Activated T-helper 2 cell treated with anti-CD3 and anti-CD28 coated beads, Interferon-gamma antibody, Interleukin-2, Interleukin-4, amounts not matched to agents 10 μg/mL and 5 μg/mL and 100 μg/mL, durations not matched to agents 14 hours and 24 hours and 36 hours (primary cell): ENCODE measurements at regions of chr2 and their contacts with region 1.

Region 1: GRCh38 chr2:121649596-121650314 is 493 bp upstream of the CLASP1 start:
- DNase-seq: peak; percentile 96
- H3K4me3 Mint-ChIP-seq: peak overlapping the region; percentile 98
- H3K27ac Mint-ChIP-seq: peak overlapping the region; percentile 98
- H3K4me1 Mint-ChIP-seq: peaks cover 49% of the 10 kb centered on the region
- H3K27me3 Mint-ChIP-seq: no peaks in the 10 kb centered on the region

Region 2: DNA sequence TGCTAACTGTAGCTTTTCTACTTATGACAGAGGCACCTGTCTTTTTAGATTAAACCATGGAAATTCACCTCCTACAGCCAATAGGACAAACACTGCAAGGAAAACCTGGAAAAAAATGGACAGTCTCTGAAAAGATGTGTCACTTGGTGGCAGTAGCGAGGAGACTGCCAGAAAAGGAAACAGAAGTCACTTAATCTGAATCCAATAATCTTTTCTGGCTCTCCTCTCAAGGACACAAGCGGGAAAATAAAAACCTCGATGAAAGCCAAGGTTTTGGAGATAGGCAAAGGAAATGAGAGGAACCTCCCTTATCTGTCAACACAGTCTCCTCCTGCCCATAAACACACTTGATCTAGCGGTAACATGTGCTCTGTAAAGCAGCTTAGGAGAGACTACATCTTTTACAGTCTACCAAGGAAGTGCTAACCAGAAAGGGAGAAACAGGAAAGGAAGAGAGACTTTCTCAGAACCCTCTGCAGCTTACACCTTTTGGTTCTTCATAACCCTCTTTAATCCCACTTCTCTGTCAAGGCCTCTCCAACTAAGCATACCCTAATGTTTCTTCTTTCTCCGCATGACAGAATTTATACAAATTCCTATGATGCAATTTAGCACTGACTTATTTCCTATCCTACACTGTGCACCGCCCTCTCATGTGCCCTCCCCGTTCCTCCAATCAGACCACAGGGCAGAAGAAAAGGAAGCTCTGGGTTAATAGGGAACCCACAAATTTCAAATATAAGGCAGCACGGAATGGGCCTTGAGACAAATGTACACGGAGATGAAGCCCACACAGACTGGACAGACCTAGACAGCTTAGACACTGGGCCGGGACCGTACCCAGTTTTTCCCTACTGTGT is 53.3 kb before region 1 on chr2:
- intact Hi-C with region 1: loop called (anchors 5 kb)
- DNase-seq: no peak
- H3K4me3 Mint-ChIP-seq: peak overlapping the region; percentile 52
- H3K27ac Mint-ChIP-seq: peak overlapping the region; percentile 52
- H3K4me1 Mint-ChIP-seq: peaks cover 35% of the 10 kb centered on the region
- H3K27me3 Mint-ChIP-seq: no peaks in the 10 kb centered on the region

Region 3: GRCh38 chr2:121699421-121700333 is 49.9 kb after region 1 on chr2:
- intact Hi-C with region 1: loop called (anchors 1 kb)
- DNase-seq: peak; percentile 81
- H3K4me3 Mint-ChIP-seq: peak overlapping the region; percentile 75
- H3K27ac Mint-ChIP-seq: peak overlapping the region; percentile 91
- H3K4me1 Mint-ChIP-seq: peaks cover 46% of the 10 kb centered on the region
- H3K27me3 Mint-ChIP-seq: no peaks in the 10 kb centered on the region

Region 4: GRCh38 chr2:121736462-121737341 is 86.9 kb after region 1 on chr2 and contains the start of gene NIFK:
- intact Hi-C with region 1: loop called (anchors 1 kb)
- DNase-seq: peak; percentile 99
- H3K4me3 Mint-ChIP-seq: peak within 1 kb of the TSS; percentile 99
- H3K27ac Mint-ChIP-seq: peak within 1 kb of the TSS; percentile 92
- H3K4me1 Mint-ChIP-seq: peaks cover 29% of the 10 kb centered on the region
- H3K27me3 Mint-ChIP-seq: no peaks in the 10 kb centered on the region
- total RNA-seq, gene NIFK: 117 and 125 TPM in 2 replicates

Region 5: GRCh38 chr2:121755236-121756111 is 105.7 kb after region 1 on chr2 and contains the start of gene TSN:
- intact Hi-C with region 1: loop called (anchors 1 kb)
- DNase-seq: peak; percentile 97
- H3K4me3 Mint-ChIP-seq: peak within 1 kb of the TSS; percentile 97
- H3K27ac Mint-ChIP-seq: peak within 1 kb of the TSS; percentile 91
- H3K4me1 Mint-ChIP-seq: peaks cover 22% of the 10 kb centered on the region
- H3K27me3 Mint-ChIP-seq: no peaks in the 10 kb centered on the region
- total RNA-seq, gene TSN: 67.6 and 72.5 TPM in 2 replicates